B cell (primary cell): ENCODE measurements at regions of chr15 and their contacts with region 1.

Region 1: GRCh38 chr15:80152180-80152845 is 486 bp upstream of the FAH start:
- DNase-seq: peak; percentile 89
- ATAC-seq: peak; percentile 88
- H3K4me3 ChIP-seq: peak overlapping the region; percentile 6 to 89 (median 77)
- H3K4me3 Mint-ChIP-seq: peak overlapping the region; percentile 81
- H3K27ac ChIP-seq: peak overlapping the region in 1 of 2 donors; percentile 38
- H3K27ac Mint-ChIP-seq: peak overlapping the region; percentile 62
- H3K4me1 ChIP-seq: peaks cover 8 to 11% of the 10 kb centered on the region in 2 donors
- H3K4me1 Mint-ChIP-seq: peaks cover 21% of the 10 kb centered on the region
- H3K27me3 ChIP-seq: no peaks in the 10 kb centered on the region
- H3K27me3 Mint-ChIP-seq: no peaks in the 10 kb centered on the region
- CTCF ChIP-seq: no peak

Region 2: GRCh38 chr15:79310983-79311900 is 841.1 kb before region 1 on chr15 and contains the start of gene TMED3:
- CTCF ChIA-PET with region 1: no interaction called
- POLR2A ChIA-PET with region 1: no interaction called
- intact Hi-C with region 1: loop called (anchors 2 kb)
- DNase-seq: peak; percentile 89
- ATAC-seq: peak; percentile 91
- H3K4me3 ChIP-seq: peak within 1 kb of the TSS; percentile 65 to 93 (median 85)
- H3K4me3 Mint-ChIP-seq: peak within 1 kb of the TSS; percentile 92
- H3K27ac ChIP-seq: peak within 1 kb of the TSS; percentile 6 to 64
- H3K27ac Mint-ChIP-seq: peak within 1 kb of the TSS; percentile 82
- H3K4me1 ChIP-seq: peaks cover 14 to 22% of the 10 kb centered on the region in 2 donors
- H3K4me1 Mint-ChIP-seq: peaks cover 27% of the 10 kb centered on the region
- H3K27me3 ChIP-seq: peaks cover 0 to 6% (median 0%) of the 10 kb centered on the region in 4 experiments
- H3K27me3 Mint-ChIP-seq: peaks cover 7% of the 10 kb centered on the region
- CTCF ChIP-seq: peak; percentile 34
- total RNA-seq, gene TMED3: 20.7 and 22.3 TPM in 2 replicates

Region 3: DNA sequence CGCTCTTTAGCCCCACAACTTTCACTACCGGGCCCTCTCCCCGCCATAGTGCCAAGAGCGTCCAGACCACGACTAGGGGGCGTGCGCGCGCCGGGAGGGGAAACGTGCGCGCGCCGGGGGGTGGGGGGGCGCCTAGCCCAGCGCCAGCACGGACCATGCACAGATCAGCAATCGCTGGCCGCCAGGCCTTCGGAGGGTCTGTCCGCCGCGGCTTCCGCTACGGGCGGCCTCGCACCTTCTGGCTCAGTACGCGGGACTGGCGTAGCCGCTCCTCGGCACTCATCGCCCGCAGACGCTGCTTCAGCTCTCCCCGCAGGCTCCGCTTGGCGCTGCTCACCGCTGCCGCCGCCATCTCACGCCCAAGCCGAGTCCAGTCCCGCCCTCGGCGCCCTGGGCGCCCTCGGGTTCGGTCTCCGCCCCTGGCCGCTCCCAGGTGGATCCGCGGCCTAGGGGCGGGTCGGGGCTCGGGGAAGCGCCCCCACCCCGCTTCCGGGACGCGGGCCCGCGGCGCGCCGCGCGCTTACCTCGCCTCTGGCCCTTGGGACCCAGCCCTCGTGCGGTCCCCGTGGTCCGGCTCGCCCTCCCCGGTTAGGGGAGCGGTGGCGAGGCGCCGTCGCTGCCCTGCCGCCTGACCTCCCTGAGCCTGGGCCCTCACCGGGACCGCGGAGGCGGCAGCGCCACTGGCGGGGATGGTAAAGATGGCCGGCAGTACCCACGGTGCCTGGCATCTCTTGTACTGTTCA is 255.5 kb before region 1 on chr15 and contains the start of gene MTHFS:
- CTCF ChIA-PET with region 1: interaction called, 3 read pairs
- POLR2A ChIA-PET with region 1: no interaction called
- intact Hi-C with region 1: loop called (anchors 1 kb)
- DNase-seq: peak; percentile 93
- ATAC-seq: peak; percentile 92
- H3K4me3 ChIP-seq: peak within 1 kb of the TSS; percentile 71 to 85 (median 79)
- H3K4me3 Mint-ChIP-seq: peak within 1 kb of the TSS; percentile 97
- H3K27ac ChIP-seq: peak within 1 kb of the TSS; percentile 90 to 98
- H3K27ac Mint-ChIP-seq: peak within 1 kb of the TSS; percentile 98
- H3K4me1 ChIP-seq: peaks cover 23 to 32% of the 10 kb centered on the region in 2 donors
- H3K4me1 Mint-ChIP-seq: peaks cover 40% of the 10 kb centered on the region
- H3K27me3 ChIP-seq: no peaks in the 10 kb centered on the region
- H3K27me3 Mint-ChIP-seq: no peaks in the 10 kb centered on the region
- CTCF ChIP-seq: peak; percentile 68
- total RNA-seq, gene MTHFS: 20.1 and 24.4 TPM in 2 replicates

Region 4: DNA sequence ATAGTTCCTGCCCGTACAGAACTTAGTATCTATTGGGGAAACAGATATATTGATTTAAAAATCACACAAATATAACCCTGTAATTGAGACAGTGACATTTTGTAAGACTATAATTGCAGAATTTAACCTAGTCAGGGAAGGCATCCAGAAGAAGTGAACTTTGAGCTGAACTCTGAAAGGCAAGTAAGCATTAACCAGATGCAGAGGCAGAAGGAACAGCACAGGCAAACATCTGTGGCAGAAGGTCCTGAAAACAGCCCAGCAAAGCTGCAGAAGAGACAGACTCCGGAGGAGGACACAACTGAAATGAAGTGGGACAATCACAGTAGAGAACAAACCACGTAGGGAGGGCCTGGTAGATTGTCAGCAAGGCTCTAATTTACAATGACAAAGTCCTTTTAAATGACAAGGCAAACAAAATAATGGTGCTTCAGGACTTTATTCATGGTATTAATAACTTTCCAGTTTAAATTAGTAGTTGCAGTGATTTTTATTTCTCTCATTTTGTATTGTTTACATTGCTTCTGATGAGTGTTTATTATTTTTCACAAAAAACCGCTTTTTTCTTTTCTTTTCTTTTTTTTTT is 195.9 kb before region 1 on chr15:
- CTCF ChIA-PET with region 1: no interaction called
- POLR2A ChIA-PET with region 1: no interaction called
- intact Hi-C with region 1: no loop called
- DNase-seq: no peak
- ATAC-seq: no peak
- H3K4me3 ChIP-seq: no peak overlapping the region
- H3K4me3 Mint-ChIP-seq: no peak overlapping the region
- H3K27ac ChIP-seq: no peak overlapping the region
- H3K27ac Mint-ChIP-seq: no peak overlapping the region
- H3K4me1 ChIP-seq: peaks cover 9 to 15% of the 10 kb centered on the region in 2 donors
- H3K4me1 Mint-ChIP-seq: peaks cover 29% of the 10 kb centered on the region
- H3K27me3 ChIP-seq: no peaks in the 10 kb centered on the region
- H3K27me3 Mint-ChIP-seq: no peaks in the 10 kb centered on the region
- CTCF ChIP-seq: no peak

Region 5: DNA sequence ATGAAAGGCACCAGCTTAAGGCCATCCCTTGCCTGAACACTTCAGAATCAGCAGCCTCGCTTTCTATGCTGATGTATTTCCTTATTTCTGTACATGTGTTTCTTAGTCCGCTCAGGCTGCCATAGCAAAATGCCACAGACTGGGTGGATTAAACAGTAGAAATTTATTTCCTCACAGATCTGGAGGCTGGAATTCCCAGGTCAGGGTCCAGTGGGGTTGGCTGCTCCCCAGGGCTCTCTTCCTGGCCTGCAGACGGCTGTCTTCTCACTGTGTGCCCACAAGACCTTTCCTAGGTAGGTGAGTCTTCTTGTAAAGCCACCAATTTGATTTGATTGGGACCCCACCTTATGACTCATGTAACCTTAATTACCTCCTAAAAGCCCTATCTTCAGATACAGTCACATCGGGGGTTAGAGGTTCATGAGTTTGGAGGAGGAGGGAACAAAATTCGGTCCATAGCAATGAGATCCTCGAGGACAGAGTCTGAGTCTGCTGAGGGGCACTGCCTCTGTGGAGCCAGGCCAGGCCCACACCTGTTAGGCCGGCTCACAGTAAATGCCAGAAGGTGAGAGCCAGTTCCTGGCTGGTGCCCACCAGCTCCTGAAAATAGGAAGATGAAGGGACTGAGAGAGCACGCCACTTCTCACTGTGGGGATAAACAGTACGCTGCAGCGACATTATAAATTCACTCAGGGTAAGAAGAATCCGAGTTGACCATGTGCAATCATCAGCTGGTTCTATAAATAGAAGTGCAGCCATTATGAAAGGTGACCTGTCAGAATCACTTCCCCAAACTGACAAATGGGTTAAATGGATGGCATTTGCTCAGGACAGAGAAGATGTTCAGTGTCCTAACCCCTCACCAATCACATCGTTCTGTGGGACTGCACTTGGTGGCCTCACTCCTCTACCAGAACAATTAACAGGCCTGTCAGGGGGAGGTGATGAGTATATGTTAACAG is 58.6 kb after region 1 on chr15:
- CTCF ChIA-PET with region 1: no interaction called
- POLR2A ChIA-PET with region 1: no interaction called
- intact Hi-C with region 1: no loop called
- DNase-seq: no peak
- ATAC-seq: no peak
- H3K4me3 ChIP-seq: no peak overlapping the region
- H3K4me3 Mint-ChIP-seq: no peak overlapping the region
- H3K27ac ChIP-seq: no peak overlapping the region
- H3K27ac Mint-ChIP-seq: no peak overlapping the region
- H3K4me1 ChIP-seq: no peaks in the 10 kb centered on the region
- H3K4me1 Mint-ChIP-seq: no peaks in the 10 kb centered on the region
- H3K27me3 ChIP-seq: peaks cover 0 to 13% (median 4%) of the 10 kb centered on the region in 4 experiments
- H3K27me3 Mint-ChIP-seq: peaks cover 36% of the 10 kb centered on the region
- CTCF ChIP-seq: no peak